ENCODE measurements at regions of chr16 and their contacts with region 1.

Region 1: GRCh38 chr16:11255737-11256660 is at the start of gene SOCS1:
- DNase-seq: peak; percentile 88 to 94
- ATAC-seq: peak; percentile 90
- H3K4me3 ChIP-seq: peak within 1 kb of the TSS; percentile 81 to 91
- H3K27ac ChIP-seq: peak within 1 kb of the TSS; percentile 81 to 93
- H3K4me1 ChIP-seq: no peaks in the 10 kb centered on the region
- H3K27me3 ChIP-seq: no peaks in the 10 kb centered on the region
- total RNA-seq, gene SOCS1: 4.3 to 6.4 TPM

Region 2: GRCh38 chr16:11105038-11105903 is 150.7 kb before region 1 on chr16:
- intact Hi-C with region 1: loop called in 1 of 2 experiments (anchors 10 kb)
- DNase-seq: no peak
- ATAC-seq: peak; percentile 83
- H3K4me3 ChIP-seq: no peak overlapping the region
- H3K27ac ChIP-seq: peak overlapping the region in 1 of 2 donors; percentile 28
- H3K4me1 ChIP-seq: peaks cover 9 to 11% of the 10 kb centered on the region in 2 donors
- H3K27me3 ChIP-seq: no peaks in the 10 kb centered on the region

Region 3: GRCh38 chr16:11224096-11224893 is 31.7 kb before region 1 on chr16:
- intact Hi-C with region 1: no loop called
- DNase-seq: peak; percentile 77 to 82
- ATAC-seq: peak; percentile 45
- H3K4me3 ChIP-seq: no peak overlapping the region
- H3K27ac ChIP-seq: no peak overlapping the region
- H3K4me1 ChIP-seq: no peaks in the 10 kb centered on the region
- H3K27me3 ChIP-seq: no peaks in the 10 kb centered on the region

Region 4: DNA sequence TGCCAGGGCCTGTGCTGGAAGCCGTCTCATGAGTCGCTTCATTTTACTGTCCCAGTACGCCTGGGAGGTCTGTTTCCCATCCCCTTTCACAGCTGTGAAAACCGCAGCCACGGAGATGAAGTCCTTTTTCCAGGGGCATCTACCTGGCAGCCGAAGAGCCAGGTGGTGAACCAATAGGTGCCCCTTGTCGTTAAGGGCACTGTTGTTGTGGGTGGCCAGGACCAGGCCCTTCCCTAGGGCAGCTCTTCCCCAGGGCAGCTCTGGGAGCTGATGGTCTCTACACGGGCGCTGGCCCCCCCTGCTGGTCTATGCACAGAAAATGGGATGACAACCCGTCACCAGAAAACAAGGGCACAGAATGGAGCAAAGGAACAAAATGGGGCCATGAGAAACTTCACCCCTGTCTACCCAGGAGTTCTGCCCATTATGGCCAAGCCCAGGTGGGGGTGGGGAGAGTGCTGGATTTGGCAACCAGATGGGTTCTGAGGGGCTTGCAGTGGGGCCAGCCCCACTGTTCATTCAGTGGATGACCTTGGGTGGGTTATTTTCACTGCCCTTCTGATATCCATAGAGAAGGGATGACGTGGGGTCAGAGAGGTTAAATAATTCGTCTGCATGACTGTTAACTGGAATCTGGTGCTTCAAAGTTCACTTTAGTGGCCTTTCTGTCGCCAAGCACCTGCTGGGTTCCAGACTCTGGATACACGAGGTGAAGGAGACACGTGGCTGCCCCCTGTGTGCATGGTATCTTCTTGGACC is 100.8 kb after region 1 on chr16:
- intact Hi-C with region 1: loop called (anchors 5 kb)
- DNase-seq: peak; percentile 81 to 87
- ATAC-seq: peak; percentile 68
- H3K4me3 ChIP-seq: no peak overlapping the region
- H3K27ac ChIP-seq: no peak overlapping the region
- H3K4me1 ChIP-seq: peaks cover 0 to 4% of the 10 kb centered on the region in 2 donors
- H3K27me3 ChIP-seq: no peaks in the 10 kb centered on the region